GM18951 (cell line): ENCODE measurements at regions of chr12 and their contacts with region 1.

Region 1: GRCh38 chr12:52082988-52083637 is 3.6 kb downstream of the SMIM41 start:
- POLR2A ChIP-seq: no peak

Region 2: GRCh38 chr12:52029686-52030085 is 53.4 kb before region 1 on chr12:
- in situ Hi-C with region 1: loop called (anchors 5 kb)
- POLR2A ChIP-seq: no peak